Mammary epithelial cell (primary cell): ENCODE measurements at regions of chr3 and their contacts with region 1.

Region 1: DNA sequence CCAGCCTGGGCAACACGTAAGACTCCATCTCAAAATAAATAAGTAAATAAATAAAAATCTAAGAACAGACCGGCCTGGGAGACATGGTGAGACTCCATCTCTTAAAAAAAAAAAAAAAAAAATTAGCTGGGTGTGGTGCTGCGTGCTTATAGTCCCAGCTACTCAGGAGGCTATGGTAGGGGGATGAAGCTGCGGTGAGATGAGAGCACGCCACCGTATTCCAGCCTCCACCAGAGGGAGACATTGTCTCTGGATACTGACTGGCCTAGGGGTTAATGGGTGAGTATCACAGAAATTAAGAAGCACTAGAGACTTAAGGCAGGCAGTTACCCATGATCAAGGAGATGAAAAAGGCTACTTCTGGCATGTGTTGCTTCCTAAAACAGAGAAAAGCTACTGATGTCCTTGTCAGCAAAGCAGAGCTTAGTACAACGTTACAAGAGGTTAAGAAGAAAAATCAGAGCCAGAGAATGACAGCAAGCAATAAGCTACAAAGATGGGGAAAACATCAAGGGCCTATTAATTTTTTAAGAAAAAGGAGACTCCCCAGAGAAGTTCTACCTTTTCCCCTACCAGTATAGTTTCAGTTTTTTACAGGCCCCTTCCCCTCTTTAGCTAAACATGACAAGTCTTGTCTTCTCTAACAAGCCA is 8.6 kb downstream of the TFRC start:
- DNase-seq: peak; percentile 31
- H3K4me3 ChIP-seq: no peak overlapping the region
- H3K27ac ChIP-seq: no peak overlapping the region
- H3K4me1 ChIP-seq: peaks cover 4% of the 10 kb centered on the region
- H3K27me3 ChIP-seq: no peaks in the 10 kb centered on the region
- CTCF ChIP-seq: peak; percentile 61 to 86

Region 2: GRCh38 chr3:194141415-194142155 is 1931.7 kb before region 1 on chr3:
- CTCF ChIA-PET with region 1: no interaction called
- dilution Hi-C with region 1: no loop called
- in situ Hi-C with region 1: no loop called
- intact Hi-C with region 1: no loop called
- DNase-seq: peak; percentile 96
- H3K4me3 ChIP-seq: peak overlapping the region in 2 of 3 experiments; percentile 35 to 38
- H3K27ac ChIP-seq: peak overlapping the region; percentile 97
- H3K4me1 ChIP-seq: peaks cover 51% of the 10 kb centered on the region
- H3K27me3 ChIP-seq: no peaks in the 10 kb centered on the region
- CTCF ChIP-seq: no peak

Region 3: DNA sequence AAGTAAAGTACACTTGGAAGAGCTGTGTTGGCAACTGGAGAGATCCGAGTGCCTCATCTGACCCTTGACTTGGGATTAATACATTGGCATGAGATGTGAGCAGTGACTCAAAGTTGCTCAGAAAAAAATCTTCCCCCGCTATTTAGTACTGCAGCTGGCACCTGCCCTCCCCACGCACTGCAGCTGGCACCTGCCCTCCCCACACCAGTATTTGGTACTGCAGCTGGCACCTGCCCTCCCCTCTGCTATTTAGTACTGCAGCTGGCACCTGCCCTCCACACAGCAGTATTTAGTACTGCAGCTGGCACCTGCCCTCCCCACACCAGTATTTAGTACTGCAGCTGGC is 356.5 kb before region 1 on chr3:
- CTCF ChIA-PET with region 1: no interaction called
- dilution Hi-C with region 1: loop called (anchors 5 kb)
- in situ Hi-C with region 1: no loop called
- intact Hi-C with region 1: no loop called
- DNase-seq: peak; percentile 64
- H3K4me3 ChIP-seq: no peak overlapping the region
- H3K27ac ChIP-seq: no peak overlapping the region
- H3K4me1 ChIP-seq: no peaks in the 10 kb centered on the region
- H3K27me3 ChIP-seq: peaks cover 6% of the 10 kb centered on the region
- CTCF ChIP-seq: no peak

Region 4: DNA sequence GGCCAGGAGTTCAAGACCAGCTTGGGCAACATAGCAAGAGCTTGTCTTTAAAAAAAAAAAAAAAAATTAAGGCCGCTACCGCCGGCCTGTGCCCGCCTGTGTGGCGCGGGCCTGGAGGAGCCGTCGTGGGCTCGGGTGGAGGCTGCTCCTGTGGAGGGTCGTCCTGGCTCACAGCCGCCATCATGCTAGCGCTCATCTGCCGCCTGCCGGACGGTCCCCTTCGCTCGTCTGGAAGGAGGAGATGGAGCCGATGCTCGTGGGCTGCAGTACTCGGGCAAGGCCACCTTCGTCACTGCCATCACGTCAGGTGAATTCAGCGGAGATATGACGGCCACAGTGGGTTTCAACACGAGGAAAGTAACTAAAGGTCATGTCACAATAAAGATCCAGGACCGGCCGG is 28.8 kb before region 1 on chr3:
- CTCF ChIA-PET with region 1: no interaction called
- dilution Hi-C with region 1: no loop called
- in situ Hi-C with region 1: no loop called
- intact Hi-C with region 1: no loop called
- DNase-seq: no peak
- H3K4me3 ChIP-seq: no peak overlapping the region
- H3K27ac ChIP-seq: no peak overlapping the region
- H3K4me1 ChIP-seq: no peaks in the 10 kb centered on the region
- H3K27me3 ChIP-seq: no peaks in the 10 kb centered on the region
- CTCF ChIP-seq: no peak

Region 5: DNA sequence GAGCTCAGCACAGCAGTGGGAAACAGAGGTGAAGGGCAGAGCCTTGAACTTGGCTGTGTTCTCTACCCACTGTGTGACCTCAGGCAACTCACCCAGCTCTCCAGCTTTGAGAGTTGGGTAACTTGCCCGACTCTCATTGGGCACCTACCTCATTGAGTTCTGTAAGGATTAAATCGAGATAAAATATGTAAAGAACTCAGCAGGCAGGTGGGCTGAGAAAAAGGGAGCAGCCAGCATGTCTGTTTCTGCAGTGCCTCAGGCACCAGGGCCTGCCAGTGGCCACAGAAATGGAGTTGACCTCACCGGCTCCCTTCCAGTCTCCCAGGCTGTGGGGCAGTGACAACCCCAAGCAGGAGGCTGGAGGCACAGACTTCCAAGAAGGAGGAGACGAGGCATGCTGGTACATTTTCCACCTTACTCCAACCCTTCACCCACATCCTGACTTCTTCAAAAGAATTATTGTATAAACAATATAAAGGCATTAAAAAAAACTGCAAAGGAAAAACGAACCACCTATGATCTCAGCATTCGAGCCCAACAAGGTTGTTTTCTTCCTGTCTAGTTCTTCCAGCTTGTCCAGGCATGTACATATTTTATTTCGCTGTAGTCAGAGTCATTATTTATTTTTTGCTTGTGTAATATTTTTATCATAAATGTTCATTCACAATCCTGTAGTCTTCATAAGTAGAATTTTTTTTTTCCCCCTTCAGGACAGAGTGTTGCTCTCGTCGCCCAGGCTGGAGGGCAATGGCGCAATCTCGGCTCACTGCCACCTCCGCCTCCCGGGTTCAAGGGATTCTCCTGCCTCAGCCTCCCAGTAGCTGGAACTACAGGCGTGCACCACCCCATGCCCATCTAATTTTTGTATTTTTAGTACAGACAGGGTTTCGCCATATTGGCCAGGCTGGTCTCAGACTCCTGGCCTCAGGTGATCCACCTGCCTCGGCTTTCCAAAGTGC is 63.0 kb after region 1 on chr3:
- CTCF ChIA-PET with region 1: no interaction called
- dilution Hi-C with region 1: no loop called
- in situ Hi-C with region 1: no loop called
- intact Hi-C with region 1: loop called (anchors 2 kb)
- DNase-seq: peak; percentile 97
- H3K4me3 ChIP-seq: peak overlapping the region in 2 of 3 experiments; percentile 17
- H3K27ac ChIP-seq: peak overlapping the region; percentile 66
- H3K4me1 ChIP-seq: peaks cover 39% of the 10 kb centered on the region
- H3K27me3 ChIP-seq: no peaks in the 10 kb centered on the region
- CTCF ChIP-seq: no peak

Region 6: DNA sequence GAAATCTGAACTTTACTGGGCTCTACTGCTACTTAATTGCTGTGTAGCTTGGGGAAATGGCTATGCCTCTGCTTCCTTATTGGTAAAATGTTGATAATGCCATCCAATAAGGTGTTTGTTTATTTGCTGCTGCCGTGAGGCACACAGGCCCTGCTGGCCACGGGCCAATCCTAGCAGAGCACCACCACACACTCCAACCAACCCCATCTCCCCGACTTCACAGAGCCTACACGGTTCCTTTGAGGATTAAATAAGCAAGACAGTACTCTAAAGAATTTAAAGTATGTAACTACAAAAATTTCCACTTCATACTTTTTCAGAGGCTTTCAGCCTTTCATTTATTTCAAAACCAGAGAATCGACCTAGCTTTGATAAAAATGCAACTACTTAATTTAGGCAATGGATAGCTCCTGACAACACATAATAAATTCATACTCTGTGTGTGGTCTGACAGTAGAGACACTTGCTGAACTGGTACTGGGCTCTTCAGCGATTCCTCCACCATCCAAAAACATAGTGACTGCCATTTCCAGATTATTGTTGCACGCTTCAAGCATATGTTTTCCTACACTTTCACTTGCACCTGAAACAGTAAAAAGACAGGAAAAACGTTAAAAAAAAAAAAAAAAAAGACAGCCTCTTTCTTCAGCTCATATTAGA is 333.6 kb after region 1 on chr3:
- CTCF ChIA-PET with region 1: no interaction called
- dilution Hi-C with region 1: loop called (anchors 10 kb)
- in situ Hi-C with region 1: no loop called
- intact Hi-C with region 1: no loop called
- DNase-seq: no peak
- H3K4me3 ChIP-seq: no peak overlapping the region
- H3K27ac ChIP-seq: no peak overlapping the region
- H3K4me1 ChIP-seq: no peaks in the 10 kb centered on the region
- H3K27me3 ChIP-seq: no peaks in the 10 kb centered on the region
- CTCF ChIP-seq: no peak

Region 7: DNA sequence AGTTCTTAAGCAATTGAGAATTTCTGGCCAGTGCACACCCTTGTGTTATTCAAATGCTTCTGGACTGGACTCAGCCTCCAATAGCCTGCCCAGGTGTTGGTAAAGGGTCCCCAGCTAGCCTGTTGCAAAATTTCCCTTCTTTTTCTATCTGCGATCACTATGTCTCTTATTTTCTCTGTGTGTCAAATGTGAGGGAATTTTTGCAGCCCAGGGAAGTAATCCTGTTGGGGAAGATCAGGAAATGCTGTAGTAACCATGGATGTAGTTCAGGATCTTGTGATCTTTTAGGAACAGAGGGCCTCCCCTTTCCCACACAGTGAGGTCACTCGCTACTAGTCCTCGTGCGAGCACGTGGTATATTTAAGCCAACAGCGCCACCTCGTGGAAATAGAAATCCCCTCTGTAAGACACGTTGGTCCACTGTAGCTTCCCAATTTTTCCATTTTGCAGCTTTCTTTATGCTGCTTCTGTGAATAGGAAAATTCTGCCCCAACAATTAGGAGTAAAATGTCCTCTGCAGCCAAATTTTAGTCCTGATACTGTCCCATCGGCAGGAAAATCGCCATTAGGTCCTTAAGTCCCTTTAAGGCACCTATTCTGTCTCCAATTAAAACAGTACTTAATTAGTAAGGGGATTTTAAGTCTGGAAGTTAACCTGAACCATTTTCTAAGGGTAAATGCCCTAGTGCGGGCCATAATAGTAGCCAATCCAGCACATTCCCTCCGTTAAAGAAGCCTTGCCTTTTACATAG is 445.8 kb after region 1 on chr3:
- CTCF ChIA-PET with region 1: no interaction called
- dilution Hi-C with region 1: no loop called
- in situ Hi-C with region 1: loop called in 1 of 2 experiments (anchors 25 kb)
- intact Hi-C with region 1: loop called (anchors 2 kb)
- DNase-seq: peak; percentile 63
- H3K4me3 ChIP-seq: no peak overlapping the region
- H3K27ac ChIP-seq: no peak overlapping the region
- H3K4me1 ChIP-seq: no peaks in the 10 kb centered on the region
- H3K27me3 ChIP-seq: no peaks in the 10 kb centered on the region
- CTCF ChIP-seq: peak; percentile 54 to 66